ENCODE measurements at regions of chr10 and their contacts with region 1.

Region 1: GRCh38 chr10:89301721-89302445 is at the start of gene IFIT2:
- DNase-seq: no peak
- ATAC-seq: peak; percentile 86
- H3K4me3 Mint-ChIP-seq: peak within 1 kb of the TSS; percentile 91
- H3K27ac Mint-ChIP-seq: peak within 1 kb of the TSS; percentile 98
- H3K4me1 Mint-ChIP-seq: peaks cover 45% of the 10 kb centered on the region
- H3K27me3 Mint-ChIP-seq: no peaks in the 10 kb centered on the region
- CTCF ChIP-seq: no peak
- total RNA-seq, gene IFIT2: 4.9 and 5.7 TPM in 2 replicates

Region 2: DNA sequence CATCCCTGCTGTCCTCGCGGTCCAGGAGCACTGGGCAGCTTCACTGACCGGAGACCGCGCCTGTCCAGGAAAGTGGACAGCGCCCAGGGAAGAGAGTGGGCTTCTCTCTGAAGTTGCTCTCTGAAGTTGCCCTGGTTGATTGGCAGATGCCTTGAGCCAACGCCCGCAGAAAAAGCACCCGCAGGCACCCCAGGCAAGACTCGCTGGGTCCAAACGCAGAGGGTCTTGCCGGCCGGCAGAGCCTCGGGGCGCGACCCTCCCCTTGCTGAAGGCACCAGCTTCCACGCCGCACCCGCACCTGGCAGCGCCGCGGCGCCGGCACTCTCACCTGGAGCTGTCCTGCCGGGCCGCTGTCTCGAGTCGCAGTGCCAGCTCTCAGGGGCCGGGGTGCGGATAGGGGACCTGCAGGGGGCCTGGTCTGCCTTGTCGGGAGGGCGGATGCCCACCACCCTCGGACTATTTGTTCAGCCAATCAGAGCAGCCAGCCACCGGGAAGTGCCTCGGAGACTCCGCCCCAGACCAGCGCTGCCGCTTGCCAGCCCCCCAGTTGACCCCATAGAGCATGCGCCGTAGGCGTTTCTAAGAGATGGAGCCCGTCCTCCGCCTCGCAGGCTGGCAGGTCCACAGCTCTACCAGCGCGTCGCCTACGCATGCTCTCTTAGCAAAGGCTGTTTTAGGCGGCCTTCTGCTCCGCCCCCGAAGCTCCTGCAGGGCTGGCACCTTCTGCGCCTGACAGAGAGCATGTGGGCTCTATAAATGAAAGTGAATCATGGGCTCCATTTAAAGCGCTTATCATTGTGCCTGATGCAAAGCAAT is 50.3 kb before region 1 on chr10 and contains the start of gene LIPA:
- CTCF ChIA-PET with region 1: no interaction called
- POLR2A ChIA-PET with region 1: interaction called, 15 read pairs
- intact Hi-C with region 1: loop called (anchors 2 kb)
- DNase-seq: peak; percentile 90
- ATAC-seq: peak; percentile 93
- H3K4me3 Mint-ChIP-seq: peak within 1 kb of the TSS; percentile 91
- H3K27ac Mint-ChIP-seq: peak within 1 kb of the TSS; percentile 79
- H3K4me1 Mint-ChIP-seq: peaks cover 26% of the 10 kb centered on the region
- H3K27me3 Mint-ChIP-seq: peaks cover 3% of the 10 kb centered on the region
- CTCF ChIP-seq: no peak
- total RNA-seq, gene LIPA: 32.8 and 35.3 TPM in 2 replicates

Region 3: GRCh38 chr10:89327784-89328441 is 26.0 kb after region 1 on chr10 and contains the start of gene IFIT3:
- CTCF ChIA-PET with region 1: interaction called, 4 read pairs
- POLR2A ChIA-PET with region 1: interaction called, 17 read pairs
- intact Hi-C with region 1: loop called (anchors 1 kb)
- DNase-seq: no peak
- ATAC-seq: peak; percentile 22
- H3K4me3 Mint-ChIP-seq: peak within 1 kb of the TSS; percentile 86
- H3K27ac Mint-ChIP-seq: peak within 1 kb of the TSS; percentile 90
- H3K4me1 Mint-ChIP-seq: peaks cover 57% of the 10 kb centered on the region
- H3K27me3 Mint-ChIP-seq: no peaks in the 10 kb centered on the region
- CTCF ChIP-seq: no peak
- total RNA-seq, gene IFIT3: 3.2 TPM in 2 replicates

Region 4: DNA sequence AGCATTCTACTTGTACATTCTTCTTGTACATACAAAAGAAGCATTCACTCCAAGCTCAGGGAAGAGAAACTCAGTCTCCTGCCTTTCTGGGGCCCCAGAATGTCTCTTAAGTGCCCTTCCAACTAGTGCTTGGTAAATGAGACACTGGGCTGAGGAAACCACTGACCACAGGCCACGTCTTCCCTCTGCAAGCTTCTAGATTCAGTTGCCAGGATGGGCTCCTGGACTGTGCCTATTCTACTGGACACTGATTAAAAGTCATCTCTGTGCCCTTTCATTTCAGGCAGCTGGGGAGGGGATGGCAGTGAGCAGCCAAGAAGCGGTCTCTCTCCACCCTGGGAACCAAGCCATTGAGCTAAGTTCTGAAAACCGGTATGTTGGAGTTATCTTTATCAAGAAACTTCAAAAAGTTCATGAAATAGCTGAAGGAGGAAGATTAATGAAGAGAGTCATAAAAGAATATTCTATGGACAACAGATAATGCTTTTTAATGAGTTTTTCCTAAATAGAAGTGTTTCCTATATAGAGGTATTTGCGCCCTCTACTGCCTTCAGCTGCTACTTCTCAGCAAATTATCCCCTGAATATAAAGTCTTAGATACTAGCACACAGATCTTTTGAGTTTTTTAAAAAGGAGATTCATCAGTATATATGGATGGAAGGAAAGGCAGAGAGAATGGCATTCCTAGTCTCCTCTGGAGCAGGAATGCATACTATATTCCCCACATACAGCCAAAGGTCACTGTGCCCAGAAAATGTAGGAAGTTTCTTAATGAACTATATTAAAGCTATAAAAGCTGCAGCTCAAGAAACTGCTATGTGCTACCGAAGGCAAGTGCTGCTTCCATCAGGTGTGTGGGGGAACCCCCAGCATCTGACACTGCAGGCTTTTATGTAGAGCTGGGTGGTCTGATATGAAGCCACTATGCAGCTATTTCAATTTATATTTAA is 67.5 kb after region 1 on chr10:
- CTCF ChIA-PET with region 1: interaction called, 19 read pairs
- POLR2A ChIA-PET with region 1: no interaction called
- intact Hi-C with region 1: loop called (anchors 2 kb)
- DNase-seq: no peak
- ATAC-seq: no peak
- H3K4me3 Mint-ChIP-seq: no peak overlapping the region
- H3K27ac Mint-ChIP-seq: no peak overlapping the region
- H3K4me1 Mint-ChIP-seq: peaks cover 6% of the 10 kb centered on the region
- H3K27me3 Mint-ChIP-seq: peaks cover 2% of the 10 kb centered on the region
- CTCF ChIP-seq: no peak

Region 5: DNA sequence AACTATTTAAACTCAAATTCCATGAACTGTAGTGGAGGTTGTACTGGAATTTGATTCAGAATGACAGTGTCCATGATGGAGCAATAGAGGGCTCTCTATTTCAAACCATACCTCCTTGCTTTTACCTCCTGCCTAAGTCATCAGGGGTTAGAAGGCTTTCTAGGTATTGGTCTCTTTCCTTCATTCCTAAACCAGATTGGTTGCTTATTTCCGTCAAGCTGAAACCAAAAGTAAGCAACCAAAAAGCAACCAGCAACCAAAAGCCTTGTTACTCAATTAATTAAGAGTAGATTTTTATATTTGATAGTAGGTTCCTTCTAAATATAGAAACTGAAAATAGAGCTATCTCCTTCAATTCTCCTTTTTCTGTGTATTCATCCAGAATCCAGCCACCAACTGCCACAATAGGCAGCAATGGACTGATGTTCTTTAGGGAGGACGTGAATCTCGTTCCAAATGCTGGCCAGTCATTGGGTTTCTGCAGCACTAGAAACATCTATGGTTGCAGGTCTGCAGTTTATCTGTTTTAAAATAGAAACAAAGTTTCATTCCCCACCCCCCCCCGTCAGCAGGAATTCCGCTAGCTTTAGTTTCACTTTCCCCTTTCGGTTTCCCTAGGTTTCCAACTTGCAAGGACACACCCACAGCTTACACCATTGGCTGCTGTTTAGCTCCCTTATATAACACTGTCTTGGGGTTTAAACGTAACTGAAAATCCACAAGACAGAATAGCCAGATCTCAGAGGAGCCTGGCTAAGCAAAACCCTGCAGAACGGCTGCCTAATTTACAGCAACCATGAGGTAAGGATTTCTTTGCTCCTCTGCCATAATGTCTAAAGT is 90.3 kb after region 1 on chr10 and contains the start of gene IFIT1:
- CTCF ChIA-PET with region 1: no interaction called
- POLR2A ChIA-PET with region 1: interaction called, 5 read pairs
- intact Hi-C with region 1: loop called (anchors 1 kb)
- DNase-seq: no peak
- ATAC-seq: peak; percentile 84
- H3K4me3 Mint-ChIP-seq: peak within 1 kb of the TSS; percentile 87
- H3K27ac Mint-ChIP-seq: peak within 1 kb of the TSS; percentile 85
- H3K4me1 Mint-ChIP-seq: peaks cover 18% of the 10 kb centered on the region
- H3K27me3 Mint-ChIP-seq: no peaks in the 10 kb centered on the region
- CTCF ChIP-seq: no peak
- total RNA-seq, gene IFIT1: 0.95 and 1.3 TPM in 2 replicates

Region 6: GRCh38 chr10:89591111-89591795 is 289.4 kb after region 1 on chr10:
- CTCF ChIA-PET with region 1: no interaction called
- POLR2A ChIA-PET with region 1: no interaction called
- intact Hi-C with region 1: no loop called
- DNase-seq: no peak
- ATAC-seq: no peak
- H3K4me3 Mint-ChIP-seq: no peak overlapping the region
- H3K27ac Mint-ChIP-seq: no peak overlapping the region
- H3K4me1 Mint-ChIP-seq: no peaks in the 10 kb centered on the region
- H3K27me3 Mint-ChIP-seq: no peaks in the 10 kb centered on the region
- CTCF ChIP-seq: no peak

Measured in activated B cell treated with CpG ODN at 0.5 μM for 24 hours (primary cell).